ENCODE measurements at regions of chr19 and their contacts with region 1.

Region 1: GRCh38 chr19:31269425-31270127 is 79.7 kb downstream of the TSHZ3 start:
- DNase-seq: no peak

Region 2: GRCh38 chr19:31349160-31349881 is 79.7 kb after region 1 on chr19 and contains the start of gene TSHZ3:
- intact Hi-C with region 1: loop called in 1 of 2 experiments (anchors 5 kb)
- DNase-seq: peak; percentile 95
- total RNA-seq, gene TSHZ3: 30.8 to 32.1 TPM

Measured in posterior vena cava (tissue), 2 donors.